Activated naive CD4-positive, alpha-beta T cell treated with anti-CD3 and anti-CD28 coated beads, Interleukin-2, amount 10 ng/mL, durations not matched to agents 7 days and 5 days (primary cell): ENCODE measurements at regions of chr4 and their contacts with region 1.

Region 1: GRCh38 chr4:89254847-89255246 is 52.8 kb downstream of the GPRIN3 start:
- DNase-seq: peak; percentile 46
- H3K4me3 Mint-ChIP-seq: no peak overlapping the region
- H3K27ac Mint-ChIP-seq: no peak overlapping the region
- H3K4me1 Mint-ChIP-seq: peaks cover 81% of the 10 kb centered on the region
- H3K27me3 Mint-ChIP-seq: no peaks in the 10 kb centered on the region

Region 2: DNA sequence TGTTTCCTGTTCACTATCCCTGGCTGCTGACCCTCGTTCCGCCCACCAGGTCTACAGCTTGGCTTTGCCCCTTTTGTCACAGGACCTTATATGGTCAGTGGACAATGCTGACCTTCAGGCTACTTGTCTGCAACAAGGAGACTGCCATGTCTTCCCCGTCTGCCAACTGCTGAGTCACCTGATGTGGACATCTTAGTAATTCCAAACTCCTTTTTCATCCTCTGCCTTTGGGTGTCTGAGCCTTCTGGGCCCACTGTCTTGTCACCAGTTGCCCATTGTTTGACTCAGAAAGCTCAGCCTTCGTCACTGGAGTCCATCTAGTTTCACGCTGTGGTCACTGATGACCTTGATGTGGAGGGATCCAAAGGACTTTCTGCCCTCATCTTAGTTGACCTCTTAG is 22.6 kb after region 1 on chr4:
- CTCF ChIA-PET with region 1: interaction called, 14 read pairs
- DNase-seq: no peak
- H3K4me3 Mint-ChIP-seq: no peak overlapping the region
- H3K27ac Mint-ChIP-seq: no peak overlapping the region
- H3K4me1 Mint-ChIP-seq: peaks cover 40% of the 10 kb centered on the region
- H3K27me3 Mint-ChIP-seq: no peaks in the 10 kb centered on the region